HCT116 (cell line): ENCODE measurements at regions of chr11 and their contacts with region 1.

Region 1: DNA sequence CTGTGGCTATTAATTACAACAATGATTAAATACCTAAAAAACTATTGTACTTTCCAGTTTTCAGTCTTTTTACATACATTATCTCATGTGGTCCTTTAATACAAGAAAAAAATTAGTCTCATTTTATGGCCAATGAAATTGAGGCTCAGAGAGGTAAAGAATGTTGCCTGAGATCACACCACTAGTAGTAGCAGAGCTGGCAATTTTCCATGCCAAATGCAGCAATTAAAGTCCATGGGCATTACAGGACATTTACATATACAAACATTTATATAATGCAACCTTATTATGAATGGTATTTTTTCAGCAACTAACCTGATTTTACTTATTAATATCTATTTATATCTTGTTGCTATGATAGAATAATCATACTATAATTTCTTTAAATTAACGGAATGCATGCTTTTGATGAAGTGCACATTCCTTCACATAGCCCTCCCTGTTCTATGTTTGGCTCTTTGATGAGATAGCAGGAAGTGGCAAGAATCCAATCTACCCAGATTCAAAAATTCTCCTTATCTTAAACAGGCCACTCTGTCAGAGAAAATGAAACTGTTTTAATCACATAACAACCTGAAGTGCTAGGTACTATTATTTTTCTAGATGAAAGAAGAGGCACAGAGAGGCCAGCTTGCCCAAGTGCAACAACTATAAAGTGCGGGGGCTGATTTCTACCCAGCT is 120.9 kb upstream of the LDLRAD3 start:
- DNase-seq: no peak
- ATAC-seq: no peak
- H3K4me3 ChIP-seq: no peak overlapping the region
- H3K27ac ChIP-seq: no peak overlapping the region
- H3K4me1 ChIP-seq: peaks cover 3 to 28% of the 10 kb centered on the region in 2 experiments; a peak in 3 of 4 replicates
- H3K27me3 ChIP-seq: no peaks in the 10 kb centered on the region
- CTCF ChIP-seq: no peak
- POLR2A ChIP-seq: no peak
- RAD21 ChIP-seq: no peak

Region 2: GRCh38 chr11:35138943-35139721 is 683.8 kb before region 1 on chr11 and contains the start of gene CD44:
- CTCF ChIA-PET with region 1: no interaction called
- POLR2A ChIA-PET with region 1: no interaction called
- RAD21 ChIA-PET with region 1: no interaction called
- intact Hi-C with region 1: no loop called
- DNase-seq: peak; percentile 73
- ATAC-seq: peak; percentile 70
- H3K4me3 ChIP-seq: peak within 1 kb of the TSS; percentile 87 to 97
- H3K27ac ChIP-seq: peak within 1 kb of the TSS; percentile 97
- H3K4me1 ChIP-seq: peaks cover 50 to 70% of the 10 kb centered on the region in 2 experiments
- H3K27me3 ChIP-seq: no peaks in the 10 kb centered on the region
- CTCF ChIP-seq: no peak
- POLR2A ChIP-seq: peak; percentile 30
- RAD21 ChIP-seq: no peak
- total RNA-seq, gene CD44: 742 TPM

Region 3: GRCh38 chr11:35654711-35655110 is 168.2 kb before region 1 on chr11:
- CTCF ChIA-PET with region 1: no interaction called
- POLR2A ChIA-PET with region 1: no interaction called
- RAD21 ChIA-PET with region 1: no interaction called
- intact Hi-C with region 1: no loop called
- DNase-seq: no peak
- ATAC-seq: no peak
- H3K4me3 ChIP-seq: no peak overlapping the region
- H3K27ac ChIP-seq: no peak overlapping the region
- H3K4me1 ChIP-seq: no peaks in the 10 kb centered on the region
- H3K27me3 ChIP-seq: no peaks in the 10 kb centered on the region
- CTCF ChIP-seq: no peak
- POLR2A ChIP-seq: no peak
- RAD21 ChIP-seq: no peak

Region 4: GRCh38 chr11:35794850-35795249 is 28.1 kb before region 1 on chr11:
- CTCF ChIA-PET with region 1: interaction called, 53 read pairs
- POLR2A ChIA-PET with region 1: interaction called, 3 read pairs
- RAD21 ChIA-PET with region 1: no interaction called
- intact Hi-C with region 1: no loop called
- DNase-seq: no peak
- ATAC-seq: no peak
- H3K4me3 ChIP-seq: no peak overlapping the region
- H3K27ac ChIP-seq: no peak overlapping the region
- H3K4me1 ChIP-seq: peaks cover 2 to 45% of the 10 kb centered on the region in 2 experiments; a peak in 2 of 4 replicates
- H3K27me3 ChIP-seq: no peaks in the 10 kb centered on the region
- CTCF ChIP-seq: no peak
- POLR2A ChIP-seq: no peak
- RAD21 ChIP-seq: no peak

Region 5: DNA sequence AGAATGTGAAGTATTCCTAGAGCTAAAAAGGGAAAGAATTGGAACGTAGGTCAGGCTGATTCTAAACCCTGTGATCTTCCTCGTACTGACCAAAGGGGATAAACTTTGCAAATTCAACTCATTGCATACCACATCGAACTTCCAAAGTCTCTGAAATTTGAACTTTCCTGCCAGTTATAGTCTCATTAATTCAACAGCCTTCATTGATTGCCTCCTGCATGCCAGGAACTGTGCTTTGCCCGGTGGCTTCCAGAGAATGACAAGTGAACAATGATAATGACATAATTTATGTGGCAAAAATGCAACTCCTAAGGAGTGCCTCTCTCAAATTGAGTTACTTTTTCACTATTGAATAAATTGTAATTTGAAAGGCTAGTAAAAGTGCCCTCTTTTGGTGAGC is 13.2 kb after region 1 on chr11:
- CTCF ChIA-PET with region 1: interaction called, 66 read pairs
- POLR2A ChIA-PET with region 1: no interaction called
- RAD21 ChIA-PET with region 1: interaction called in 1 of 2 experiments, 3 read pairs
- intact Hi-C with region 1: no loop called
- DNase-seq: no peak
- ATAC-seq: no peak
- H3K4me3 ChIP-seq: no peak overlapping the region
- H3K27ac ChIP-seq: no peak overlapping the region
- H3K4me1 ChIP-seq: no peaks in the 10 kb centered on the region
- H3K27me3 ChIP-seq: no peaks in the 10 kb centered on the region
- CTCF ChIP-seq: no peak
- POLR2A ChIP-seq: no peak
- RAD21 ChIP-seq: no peak

Region 6: DNA sequence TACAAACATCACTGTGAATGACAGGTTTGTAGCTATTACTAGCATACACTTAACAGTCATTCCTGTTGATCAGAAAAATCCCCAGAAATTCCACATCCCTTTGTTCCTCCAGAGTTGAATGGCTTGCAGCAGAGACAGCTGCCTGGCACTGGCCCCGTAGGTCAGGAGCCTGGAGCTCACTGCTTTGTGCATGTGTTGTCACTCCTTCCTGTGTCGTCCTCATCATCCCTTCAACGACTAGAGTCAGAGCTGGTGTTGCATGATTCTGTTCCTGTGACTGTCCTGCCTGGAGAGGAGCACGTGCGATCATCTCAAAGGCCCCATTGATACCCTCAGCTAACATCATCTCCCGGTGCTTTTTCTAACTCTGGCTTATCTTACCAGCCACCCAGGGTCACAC is 179.2 kb after region 1 on chr11:
- CTCF ChIA-PET with region 1: no interaction called
- POLR2A ChIA-PET with region 1: no interaction called
- RAD21 ChIA-PET with region 1: no interaction called
- intact Hi-C with region 1: no loop called
- DNase-seq: no peak
- ATAC-seq: no peak
- H3K4me3 ChIP-seq: no peak overlapping the region
- H3K27ac ChIP-seq: no peak overlapping the region
- H3K4me1 ChIP-seq: no peaks in the 10 kb centered on the region; a peak in 1 of 4 replicates
- H3K27me3 ChIP-seq: no peaks in the 10 kb centered on the region
- CTCF ChIP-seq: no peak
- POLR2A ChIP-seq: no peak
- RAD21 ChIP-seq: no peak

Region 7: DNA sequence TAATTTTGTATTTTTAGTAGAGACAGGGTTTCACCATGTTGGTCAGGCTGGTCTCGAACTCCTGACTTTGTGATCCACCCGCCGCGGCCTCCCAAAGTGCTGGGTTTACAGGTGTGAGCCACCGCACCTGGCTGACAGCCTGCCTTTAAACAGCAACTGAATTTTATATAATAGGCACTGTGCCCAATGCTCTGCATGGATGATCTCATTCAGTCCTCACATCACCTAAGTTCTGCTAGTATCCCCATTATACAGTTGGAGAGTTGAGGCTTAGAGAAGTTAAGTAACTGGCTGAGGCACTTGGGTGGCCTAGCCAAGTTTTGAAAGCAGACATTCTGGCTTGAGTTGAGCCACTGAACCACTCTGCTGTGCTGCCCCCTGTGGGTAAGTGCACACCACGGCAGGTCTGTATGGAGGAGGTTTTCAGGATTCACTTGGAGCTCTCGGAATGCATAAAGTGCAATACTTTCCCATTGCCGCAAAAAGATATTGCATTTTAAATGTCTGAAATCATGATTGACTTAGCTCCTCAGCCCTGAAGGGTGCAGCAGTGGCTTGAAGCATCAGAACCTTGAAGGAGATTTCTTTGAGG is 233.3 kb after region 1 on chr11:
- CTCF ChIA-PET with region 1: interaction called, 26 read pairs
- POLR2A ChIA-PET with region 1: no interaction called
- RAD21 ChIA-PET with region 1: interaction called, 3 to 4 read pairs
- intact Hi-C with region 1: loop called (anchors 2 kb)
- DNase-seq: no peak
- ATAC-seq: peak; percentile 84
- H3K4me3 ChIP-seq: no peak overlapping the region
- H3K27ac ChIP-seq: no peak overlapping the region
- H3K4me1 ChIP-seq: no peaks in the 10 kb centered on the region
- H3K27me3 ChIP-seq: no peaks in the 10 kb centered on the region
- CTCF ChIP-seq: peak; percentile 45 to 91 (median 81); a peak in 5 of 6 replicates
- POLR2A ChIP-seq: no peak
- RAD21 ChIP-seq: peak; percentile 67

Region 8: GRCh38 chr11:36258730-36259360 is 435.9 kb after region 1 on chr11:
- CTCF ChIA-PET with region 1: interaction called, 57 read pairs
- POLR2A ChIA-PET with region 1: no interaction called
- RAD21 ChIA-PET with region 1: interaction called, 8 to 13 read pairs
- intact Hi-C with region 1: loop called (anchors 2 kb)
- DNase-seq: peak; percentile 36
- ATAC-seq: peak; percentile 97
- H3K4me3 ChIP-seq: no peak overlapping the region
- H3K27ac ChIP-seq: no peak overlapping the region
- H3K4me1 ChIP-seq: peaks cover 3 to 20% of the 10 kb centered on the region in 2 experiments; a peak in 3 of 4 replicates
- H3K27me3 ChIP-seq: no peaks in the 10 kb centered on the region
- CTCF ChIP-seq: peak; percentile 78 to 80 (median 78)
- POLR2A ChIP-seq: no peak
- RAD21 ChIP-seq: peak; percentile 87